Activated CD8-positive, alpha-beta memory T cell treated with anti-CD3 and anti-CD28 coated beads, Interleukin-2, amount 10 ng/mL, durations not matched to agents 7 days and 5 days (primary cell): ENCODE measurements at regions of chr13 and their contacts with region 1.

Region 1: DNA sequence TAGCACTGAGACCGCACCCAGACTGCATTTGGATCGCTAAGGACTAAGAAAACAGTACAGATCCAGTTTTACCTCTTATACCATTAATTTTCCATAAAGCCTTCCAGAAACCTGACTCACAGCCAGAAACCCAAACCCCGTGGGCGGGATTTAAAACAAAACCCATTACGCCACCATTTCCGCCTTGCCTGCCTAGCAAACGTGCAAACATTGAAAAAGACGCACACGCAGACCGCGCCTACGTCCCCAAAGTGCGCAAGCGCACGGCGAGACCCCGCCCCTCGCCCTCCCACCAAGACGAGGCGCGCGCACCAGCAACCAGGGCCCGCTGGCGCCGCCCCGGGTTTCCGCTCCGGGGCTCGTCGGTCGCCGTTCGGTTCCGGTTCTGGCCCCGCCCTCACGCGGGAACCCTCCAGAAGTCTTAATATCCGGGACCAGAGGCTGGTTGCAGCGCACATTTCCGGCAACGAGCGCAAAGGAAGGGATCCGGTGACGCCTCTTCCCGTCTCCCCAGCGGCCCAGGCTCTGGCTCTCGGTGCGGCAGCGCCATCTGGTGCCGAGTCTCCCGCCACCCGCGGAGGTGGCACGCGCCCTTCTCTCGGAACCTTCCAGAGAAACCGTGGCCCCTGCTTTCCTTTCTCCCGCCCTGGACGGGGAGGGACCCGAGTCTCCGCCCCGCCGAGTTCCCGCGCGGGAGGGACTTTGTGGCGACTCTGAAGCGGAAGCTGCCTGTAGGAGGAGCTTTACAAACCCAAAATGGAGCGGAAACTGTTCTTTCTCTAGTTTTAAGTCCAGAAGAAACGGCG is 256.9 kb upstream of the STARD13 start:
- DNase-seq: peak; percentile 98
- ATAC-seq: peak; percentile 87
- H3K4me3 Mint-ChIP-seq: peak overlapping the region; percentile 80
- H3K27ac Mint-ChIP-seq: peak overlapping the region; percentile 97
- H3K4me1 Mint-ChIP-seq: peaks cover 32% of the 10 kb centered on the region
- H3K27me3 Mint-ChIP-seq: no peaks in the 10 kb centered on the region

Region 2: GRCh38 chr13:33462109-33462508 is 80.4 kb before region 1 on chr13:
- CTCF ChIA-PET with region 1: no interaction called
- DNase-seq: no peak
- ATAC-seq: no peak
- H3K4me3 Mint-ChIP-seq: no peak overlapping the region
- H3K27ac Mint-ChIP-seq: no peak overlapping the region
- H3K4me1 Mint-ChIP-seq: no peaks in the 10 kb centered on the region
- H3K27me3 Mint-ChIP-seq: peaks cover 2% of the 10 kb centered on the region

Region 3: DNA sequence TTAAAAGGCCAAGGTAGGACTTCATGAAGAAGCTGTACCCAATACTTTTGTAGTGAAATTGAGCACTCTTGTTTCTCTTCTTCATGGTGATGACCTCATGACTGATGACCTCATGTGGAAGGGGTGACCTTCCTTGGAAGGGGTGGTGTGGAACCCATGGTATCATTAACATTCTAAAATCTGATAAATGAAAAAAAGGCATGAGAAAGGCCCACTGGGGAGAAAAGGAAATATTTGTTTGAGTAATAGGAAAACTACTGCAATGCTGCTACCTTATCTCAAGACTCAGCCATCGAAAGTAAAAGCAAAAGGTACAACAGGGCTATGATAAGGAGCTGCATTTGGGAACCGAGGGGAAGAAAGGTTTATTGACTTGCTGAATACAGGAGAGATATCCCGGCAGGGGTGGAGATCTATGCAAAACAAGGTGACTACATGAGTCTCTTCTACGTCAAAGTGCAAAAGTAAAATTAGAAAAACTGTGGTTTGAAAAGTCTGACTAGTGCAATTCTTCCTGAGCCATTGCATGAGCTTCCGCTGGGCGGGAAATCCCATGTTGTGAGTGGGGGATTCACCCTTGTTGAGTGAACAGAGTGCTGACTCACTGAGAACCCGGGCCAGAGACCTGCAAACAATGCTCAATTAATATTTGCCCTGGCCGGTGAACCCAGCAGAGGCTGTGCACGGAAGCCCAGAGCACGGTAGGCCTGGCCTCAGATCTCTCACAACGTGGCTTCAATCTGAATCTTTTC is 136.6 kb after region 1 on chr13:
- CTCF ChIA-PET with region 1: interaction called, 20 read pairs
- DNase-seq: peak; percentile 89
- ATAC-seq: peak; percentile 87
- H3K4me3 Mint-ChIP-seq: peak overlapping the region; percentile 88
- H3K27ac Mint-ChIP-seq: peak overlapping the region; percentile 100
- H3K4me1 Mint-ChIP-seq: peaks cover 55% of the 10 kb centered on the region
- H3K27me3 Mint-ChIP-seq: no peaks in the 10 kb centered on the region